SK-N-SH (cell line): ENCODE measurements at regions of chr12 and their contacts with region 1.

Region 1: GRCh38 chr12:93397412-93397811 is 19.7 kb downstream of the NUDT4 start:
- DNase-seq: no peak
- H3K4me3 ChIP-seq: no peak overlapping the region
- H3K27ac ChIP-seq: peak overlapping the region in 1 of 2 experiments; percentile 16; a peak in 1 of 4 replicates
- H3K4me1 ChIP-seq: no peaks in the 10 kb centered on the region
- H3K27me3 ChIP-seq: no peaks in the 10 kb centered on the region
- CTCF ChIP-seq: no peak
- EP300 ChIP-seq: no peak
- RAD21 ChIP-seq: no peak

Region 2: GRCh38 chr12:92784795-92785562 is 612.4 kb before region 1 on chr12:
- CTCF ChIA-PET with region 1: interaction called, 11 read pairs
- POLR2A ChIA-PET with region 1: no interaction called
- DNase-seq: peak; percentile 38
- H3K4me3 ChIP-seq: no peak overlapping the region; a peak in 1 of 4 replicates
- H3K27ac ChIP-seq: peak overlapping the region; percentile 24 to 69; a peak in 3 of 4 replicates
- H3K4me1 ChIP-seq: peaks cover 2 to 5% of the 10 kb centered on the region in 2 experiments; a peak in 2 of 4 replicates
- H3K27me3 ChIP-seq: no peaks in the 10 kb centered on the region
- CTCF ChIP-seq: peak; percentile 60
- EP300 ChIP-seq: no peak
- RAD21 ChIP-seq: peak; percentile 81

Region 3: DNA sequence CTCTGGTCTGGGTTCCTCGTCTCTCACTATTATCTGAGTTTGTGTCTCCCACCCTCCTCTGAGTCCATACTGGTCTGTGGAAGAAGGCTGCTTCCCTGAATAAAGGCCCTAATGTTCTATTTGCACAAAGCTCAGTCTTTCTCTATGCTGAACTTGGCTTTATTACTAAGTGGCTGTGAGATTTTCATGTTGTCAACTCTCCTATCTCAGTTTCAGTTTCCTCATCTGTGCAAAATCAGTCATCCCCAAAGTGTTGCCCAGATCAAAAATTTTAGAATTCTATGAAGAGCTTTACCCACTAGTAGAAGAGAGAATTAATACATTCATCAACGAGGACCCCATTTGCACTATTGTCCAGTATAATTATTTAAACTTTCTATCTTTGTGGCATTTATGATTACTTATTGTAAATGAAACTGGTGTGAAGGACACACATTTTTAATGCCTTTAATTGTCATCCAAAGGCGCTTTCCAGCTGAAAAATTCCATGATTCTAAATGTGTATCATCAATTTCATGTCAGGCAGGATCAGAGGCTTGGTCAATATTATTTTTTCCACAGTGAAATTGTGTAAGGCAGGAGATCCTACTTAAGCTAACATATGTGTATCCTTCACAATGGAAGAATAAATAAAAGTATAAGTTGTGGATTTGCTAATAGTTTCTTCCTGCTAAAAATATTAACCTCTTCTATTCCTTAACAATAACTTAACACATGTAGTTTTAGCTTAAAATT is 389.2 kb before region 1 on chr12:
- CTCF ChIA-PET with region 1: interaction called, 22 read pairs
- POLR2A ChIA-PET with region 1: no interaction called
- DNase-seq: no peak
- H3K4me3 ChIP-seq: no peak overlapping the region
- H3K27ac ChIP-seq: no peak overlapping the region
- H3K4me1 ChIP-seq: no peaks in the 10 kb centered on the region
- H3K27me3 ChIP-seq: no peaks in the 10 kb centered on the region
- CTCF ChIP-seq: no peak
- EP300 ChIP-seq: no peak
- RAD21 ChIP-seq: no peak

Region 4: GRCh38 chr12:93098077-93098476 is 299.3 kb before region 1 on chr12:
- CTCF ChIA-PET with region 1: interaction called, 13 read pairs
- POLR2A ChIA-PET with region 1: no interaction called
- DNase-seq: no peak
- H3K4me3 ChIP-seq: no peak overlapping the region
- H3K27ac ChIP-seq: no peak overlapping the region
- H3K4me1 ChIP-seq: peaks cover 8 to 22% of the 10 kb centered on the region in 2 experiments; a peak in 3 of 4 replicates
- H3K27me3 ChIP-seq: no peaks in the 10 kb centered on the region
- CTCF ChIP-seq: peak; percentile 55
- EP300 ChIP-seq: no peak
- RAD21 ChIP-seq: peak; percentile 45